RWPE1 (cell line): ENCODE measurements at regions of chr7 and their contacts with region 1.

Region 1: DNA sequence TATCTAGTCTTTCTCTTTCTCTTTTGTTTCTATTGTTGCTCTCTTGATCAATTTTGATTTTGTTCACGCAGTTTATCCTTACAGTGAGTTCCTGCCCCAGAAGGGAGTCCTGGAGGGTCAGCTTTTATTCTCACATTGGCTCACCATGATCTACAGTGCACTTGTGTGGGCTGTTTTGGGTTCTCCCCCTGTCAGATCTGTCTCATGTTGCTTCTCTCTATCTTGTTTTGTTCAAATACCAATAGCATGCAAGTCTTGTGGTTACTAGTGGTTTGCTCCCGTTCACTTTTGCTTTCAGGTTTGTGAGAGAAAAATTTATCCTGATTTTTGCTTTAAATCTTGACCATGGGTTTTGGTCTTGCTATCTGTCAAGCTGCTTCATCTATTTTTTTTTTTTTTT is 74.3 kb downstream of the PTN start:
- DNase-seq: no peak
- H3K27ac ChIP-seq: no peak overlapping the region
- CTCF ChIP-seq: no peak

Region 2: GRCh38 chr7:137287651-137288258 is 18.5 kb after region 1 on chr7:
- CTCF ChIA-PET with region 1: interaction called, 10 read pairs
- POLR2A ChIA-PET with region 1: no interaction called
- DNase-seq: no peak
- H3K27ac ChIP-seq: no peak overlapping the region
- CTCF ChIP-seq: peak; percentile 17

Region 3: GRCh38 chr7:137421366-137421765 is 152.1 kb after region 1 on chr7:
- CTCF ChIA-PET with region 1: no interaction called
- POLR2A ChIA-PET with region 1: no interaction called
- DNase-seq: no peak
- H3K27ac ChIP-seq: no peak overlapping the region
- CTCF ChIP-seq: no peak